ENCODE measurements at regions of chr1 and their contacts with region 1.

Region 1: DNA sequence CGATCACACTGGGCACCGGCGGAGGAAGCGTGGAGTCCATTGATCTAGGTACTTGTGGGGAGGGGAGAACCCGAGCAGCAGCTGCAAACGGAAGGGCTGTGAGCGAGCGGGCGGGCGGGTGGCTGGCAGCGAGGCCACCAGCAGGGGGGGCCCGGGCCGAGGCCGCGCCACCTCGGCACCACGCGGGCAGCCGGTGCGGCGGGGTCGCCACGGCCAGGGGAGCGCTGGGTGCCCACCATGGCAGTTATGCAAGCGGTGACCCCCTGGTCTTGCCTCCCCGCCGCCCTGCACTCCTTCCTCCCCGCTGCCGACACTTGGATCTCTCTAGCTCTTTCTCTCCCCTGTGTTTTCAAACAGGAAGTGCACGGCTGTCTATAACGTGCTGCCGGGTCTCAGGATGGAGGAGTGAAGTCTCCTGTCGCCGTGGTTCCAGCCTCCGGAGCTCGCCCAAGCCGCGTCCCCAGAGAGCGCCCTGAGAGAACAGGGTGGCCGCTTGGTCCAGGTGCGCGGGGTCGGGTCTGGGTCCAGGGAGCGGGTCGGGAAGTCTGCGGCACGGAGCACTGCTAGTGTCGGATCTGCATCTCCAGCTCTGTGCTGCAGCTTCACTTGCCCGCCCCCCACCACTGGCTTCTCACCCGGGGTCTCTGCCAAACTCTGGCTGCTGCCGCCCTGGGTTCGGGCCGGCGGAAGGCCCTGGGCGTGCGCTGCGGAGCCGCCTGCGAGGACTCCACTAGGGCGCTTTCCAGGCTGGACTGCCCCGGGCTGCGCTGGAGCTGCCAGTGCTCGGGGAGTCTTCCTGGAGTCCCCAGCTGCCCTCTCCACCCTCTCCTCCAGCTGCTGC is 22.7 kb downstream of the LRRC8D start:
- DNase-seq: peak; percentile 76
- ATAC-seq: peak; percentile 91
- H3K4me3 Mint-ChIP-seq: peak overlapping the region; percentile 94
- H3K27ac Mint-ChIP-seq: peak overlapping the region; percentile 90
- H3K4me1 Mint-ChIP-seq: peaks cover 53% of the 10 kb centered on the region
- H3K27me3 Mint-ChIP-seq: no peaks in the 10 kb centered on the region
- CTCF ChIP-seq: peak; percentile 45

Region 2: DNA sequence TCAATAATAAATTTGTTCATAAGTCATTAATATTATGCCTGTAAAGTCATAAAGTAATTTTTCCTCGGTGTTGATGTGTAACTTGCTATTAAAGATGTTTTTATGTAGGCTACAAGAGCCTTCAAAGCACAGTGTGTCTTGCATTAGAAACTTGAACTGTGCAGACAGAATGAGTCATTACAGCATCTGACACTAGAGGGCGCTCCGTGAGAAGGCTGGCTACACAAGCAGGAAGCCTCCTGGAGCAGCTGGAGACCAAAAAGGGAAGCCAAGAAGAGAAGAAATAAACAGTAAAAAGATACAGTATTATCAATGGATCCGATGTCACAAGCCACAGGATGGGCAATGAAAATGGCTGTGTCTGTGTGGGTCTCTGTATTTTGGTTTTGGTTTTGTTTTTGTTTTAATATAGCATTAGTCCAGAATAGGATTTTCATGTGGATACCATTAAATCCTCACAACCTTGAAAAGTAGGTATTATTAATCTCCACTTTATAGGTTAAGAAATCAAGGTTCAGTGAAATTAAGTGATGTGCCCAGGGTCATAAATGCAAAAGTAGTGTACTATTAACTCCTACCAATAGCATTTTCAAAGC is 38.8 kb before region 1 on chr1:
- CTCF ChIA-PET with region 1: interaction called, 17 read pairs
- POLR2A ChIA-PET with region 1: interaction called, 4 read pairs
- intact Hi-C with region 1: loop called (anchors 5 kb)
- DNase-seq: peak; percentile 59
- ATAC-seq: peak; percentile 94
- H3K4me3 Mint-ChIP-seq: no peak overlapping the region
- H3K27ac Mint-ChIP-seq: no peak overlapping the region
- H3K4me1 Mint-ChIP-seq: no peaks in the 10 kb centered on the region
- H3K27me3 Mint-ChIP-seq: no peaks in the 10 kb centered on the region
- CTCF ChIP-seq: peak; percentile 92

Region 3: DNA sequence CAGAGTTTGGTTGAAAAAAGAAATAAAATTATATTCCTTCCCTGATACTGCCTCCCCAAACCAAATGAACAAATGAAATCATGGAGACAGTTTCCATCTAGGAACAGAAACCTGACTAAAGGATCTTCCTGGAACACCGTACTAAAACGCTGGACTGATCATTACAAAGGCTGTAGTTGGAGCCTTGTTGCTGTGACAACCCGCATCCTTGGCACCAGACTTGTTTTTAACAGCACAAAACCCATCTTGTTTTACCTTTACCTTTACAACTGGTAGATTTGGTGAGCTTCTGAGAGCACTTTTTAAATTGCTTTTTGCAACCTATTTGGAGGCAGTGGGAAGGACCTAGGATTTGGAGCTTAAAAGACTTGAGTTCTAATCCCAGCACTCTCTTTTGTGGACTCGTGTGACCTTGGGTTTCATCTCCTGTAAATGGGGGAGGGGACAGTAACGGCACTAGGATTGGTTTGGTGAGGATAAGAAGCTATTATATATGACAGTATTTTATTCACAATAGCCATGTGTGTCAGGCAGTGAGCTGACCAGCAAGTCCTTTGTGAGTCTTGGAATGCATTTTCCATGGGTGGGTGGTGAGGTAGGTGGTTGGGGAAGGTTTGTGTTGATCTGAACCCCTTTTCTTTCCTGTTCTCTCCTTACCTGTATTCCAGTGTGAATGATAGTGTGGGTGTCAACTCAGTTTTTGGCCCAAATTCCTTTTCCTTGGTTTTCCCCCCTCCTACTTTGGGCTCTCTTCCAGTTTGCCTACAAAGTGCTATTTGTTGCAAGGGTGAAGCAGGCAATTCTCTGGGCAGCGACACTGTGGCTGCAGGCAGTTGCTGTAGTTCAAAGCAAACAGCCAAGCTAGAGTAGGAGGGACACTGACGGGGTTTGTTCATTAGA is 10.1 kb before region 1 on chr1:
- CTCF ChIA-PET with region 1: interaction called, 5 read pairs
- POLR2A ChIA-PET with region 1: interaction called, 5 read pairs
- intact Hi-C with region 1: loop called (anchors 1 kb)
- DNase-seq: no peak
- ATAC-seq: no peak
- H3K4me3 Mint-ChIP-seq: no peak overlapping the region
- H3K27ac Mint-ChIP-seq: no peak overlapping the region
- H3K4me1 Mint-ChIP-seq: peaks cover 32% of the 10 kb centered on the region
- H3K27me3 Mint-ChIP-seq: no peaks in the 10 kb centered on the region
- CTCF ChIP-seq: no peak

Region 4: GRCh38 chr1:89855413-89856123 is 12.1 kb after region 1 on chr1:
- CTCF ChIA-PET with region 1: interaction called, 12 read pairs
- POLR2A ChIA-PET with region 1: interaction called, 7 read pairs
- intact Hi-C with region 1: loop called (anchors 1 kb)
- DNase-seq: no peak
- ATAC-seq: peak; percentile 89
- H3K4me3 Mint-ChIP-seq: peak overlapping the region; percentile 61
- H3K27ac Mint-ChIP-seq: no peak overlapping the region
- H3K4me1 Mint-ChIP-seq: peaks cover 2% of the 10 kb centered on the region
- H3K27me3 Mint-ChIP-seq: no peaks in the 10 kb centered on the region
- CTCF ChIP-seq: no peak

Region 5: DNA sequence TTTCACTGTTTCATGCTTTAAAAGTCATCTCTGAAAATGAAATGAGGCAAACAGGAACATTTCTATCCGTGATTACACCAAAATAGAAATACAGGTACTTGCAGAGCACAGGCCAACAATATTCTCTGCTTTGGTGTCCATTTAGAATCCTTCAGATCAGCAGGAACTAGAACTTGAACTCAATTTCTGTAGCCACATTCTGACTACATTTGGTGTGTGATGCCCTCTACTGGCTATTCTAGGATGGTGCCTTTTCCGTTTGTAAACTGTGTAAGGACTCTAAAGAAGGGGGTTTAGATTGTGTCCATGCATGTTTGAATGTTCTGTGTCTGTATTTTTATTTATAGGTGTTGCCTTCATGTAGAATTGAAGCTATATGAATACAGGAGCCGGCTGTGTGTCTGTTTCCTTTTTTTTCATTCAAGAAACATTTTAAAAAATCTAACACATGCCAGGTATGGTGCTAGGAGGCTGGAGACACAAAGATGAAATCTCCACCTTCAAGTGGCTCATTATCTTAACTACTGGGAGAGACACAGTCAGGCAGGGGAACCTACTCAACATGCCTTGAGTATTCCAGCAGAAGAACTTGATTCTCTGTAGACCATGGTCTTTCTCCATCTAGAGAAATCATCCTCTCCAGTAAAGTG is 143.8 kb after region 1 on chr1:
- CTCF ChIA-PET with region 1: interaction called, 32 read pairs
- POLR2A ChIA-PET with region 1: no interaction called
- intact Hi-C with region 1: loop called (anchors 1 kb)
- DNase-seq: no peak
- ATAC-seq: peak; percentile 74
- H3K4me3 Mint-ChIP-seq: no peak overlapping the region
- H3K27ac Mint-ChIP-seq: no peak overlapping the region
- H3K4me1 Mint-ChIP-seq: no peaks in the 10 kb centered on the region
- H3K27me3 Mint-ChIP-seq: no peaks in the 10 kb centered on the region
- CTCF ChIP-seq: peak; percentile 60

Region 6: GRCh38 chr1:89994805-89995597 is 151.5 kb after region 1 on chr1 and contains the start of gene ZNF326:
- CTCF ChIA-PET with region 1: interaction called, 11 read pairs
- POLR2A ChIA-PET with region 1: no interaction called
- intact Hi-C with region 1: loop called (anchors 2 kb)
- DNase-seq: peak; percentile 98
- ATAC-seq: peak; percentile 97
- H3K4me3 Mint-ChIP-seq: peak within 1 kb of the TSS; percentile 94
- H3K27ac Mint-ChIP-seq: peak within 1 kb of the TSS; percentile 88
- H3K4me1 Mint-ChIP-seq: peaks cover 32% of the 10 kb centered on the region
- H3K27me3 Mint-ChIP-seq: no peaks in the 10 kb centered on the region
- CTCF ChIP-seq: no peak
- total RNA-seq, gene ZNF326: 26.2 and 30.3 TPM in 2 replicates

Measured in activated B cell treated with CpG ODN at 0.5 μM for 24 hours (primary cell).